ENCODE measurements at regions of chrX and their contacts with region 1.

Region 1: GRCh38 chrX:149962859-149963757 is 24.8 kb upstream of the EOLA2 start:
- DNase-seq: no peak

Region 2: DNA sequence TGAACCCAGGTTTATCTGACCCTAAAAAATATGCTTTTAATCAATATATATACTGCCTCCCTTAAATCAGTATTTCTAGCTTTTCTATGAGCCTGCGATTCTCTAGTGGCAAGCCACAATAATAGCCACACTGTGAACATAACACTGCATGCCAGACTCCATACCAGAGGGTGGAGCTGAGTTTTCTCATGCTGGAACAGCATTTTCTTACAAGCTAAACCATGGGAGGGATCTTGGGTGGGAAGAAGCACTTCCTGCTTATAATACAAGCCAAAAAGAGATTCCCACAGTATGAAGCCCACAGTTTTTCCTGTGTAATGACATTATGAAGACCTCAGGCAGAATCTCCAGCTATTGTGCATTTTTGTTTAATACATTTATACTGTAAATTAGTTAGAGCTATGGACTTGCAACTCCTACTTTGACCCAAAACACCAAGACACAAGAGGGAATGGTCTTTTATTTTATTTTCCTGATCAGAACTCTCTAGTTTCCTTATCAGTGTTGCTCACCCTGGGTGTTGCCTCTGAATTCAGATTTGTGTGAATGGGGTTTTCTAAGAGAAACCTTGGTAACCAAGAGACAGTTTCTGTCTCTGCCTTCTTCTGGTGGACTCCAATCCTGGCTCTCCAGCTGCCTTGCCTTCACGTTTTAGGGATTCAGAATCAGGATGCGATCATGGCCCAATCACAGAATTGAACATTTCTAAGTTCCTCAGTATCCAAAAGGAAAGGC is 49.7 kb after region 1 on chrX:
- intact Hi-C with region 1: no loop called
- DNase-seq: no peak

Region 3: GRCh38 chrX:150200820-150201287 is 237.7 kb after region 1 on chrX:
- intact Hi-C with region 1: loop called (anchors 10 kb)
- DNase-seq: no peak

Region 4: GRCh38 chrX:150365051-150365989 is 402.2 kb after region 1 on chrX:
- intact Hi-C with region 1: loop called (anchors 5 kb)
- DNase-seq: peak; percentile 87

Region 5: GRCh38 chrX:150486011-150486410 is 522.9 kb after region 1 on chrX:
- intact Hi-C with region 1: loop called (anchors 10 kb)
- DNase-seq: no peak

Region 6: GRCh38 chrX:150676221-150676620 is 713.1 kb after region 1 on chrX:
- intact Hi-C with region 1: loop called (anchors 5 kb)
- DNase-seq: no peak

Measured in cardiac septum (tissue), 1 donor.